Activated CD8-positive, alpha-beta memory T cell treated with anti-CD3 and anti-CD28 coated beads, Interleukin-2, amount 10 ng/mL, durations not matched to agents 7 days and 5 days (primary cell): ENCODE measurements at regions of chr4 and their contacts with region 1.

Region 1: DNA sequence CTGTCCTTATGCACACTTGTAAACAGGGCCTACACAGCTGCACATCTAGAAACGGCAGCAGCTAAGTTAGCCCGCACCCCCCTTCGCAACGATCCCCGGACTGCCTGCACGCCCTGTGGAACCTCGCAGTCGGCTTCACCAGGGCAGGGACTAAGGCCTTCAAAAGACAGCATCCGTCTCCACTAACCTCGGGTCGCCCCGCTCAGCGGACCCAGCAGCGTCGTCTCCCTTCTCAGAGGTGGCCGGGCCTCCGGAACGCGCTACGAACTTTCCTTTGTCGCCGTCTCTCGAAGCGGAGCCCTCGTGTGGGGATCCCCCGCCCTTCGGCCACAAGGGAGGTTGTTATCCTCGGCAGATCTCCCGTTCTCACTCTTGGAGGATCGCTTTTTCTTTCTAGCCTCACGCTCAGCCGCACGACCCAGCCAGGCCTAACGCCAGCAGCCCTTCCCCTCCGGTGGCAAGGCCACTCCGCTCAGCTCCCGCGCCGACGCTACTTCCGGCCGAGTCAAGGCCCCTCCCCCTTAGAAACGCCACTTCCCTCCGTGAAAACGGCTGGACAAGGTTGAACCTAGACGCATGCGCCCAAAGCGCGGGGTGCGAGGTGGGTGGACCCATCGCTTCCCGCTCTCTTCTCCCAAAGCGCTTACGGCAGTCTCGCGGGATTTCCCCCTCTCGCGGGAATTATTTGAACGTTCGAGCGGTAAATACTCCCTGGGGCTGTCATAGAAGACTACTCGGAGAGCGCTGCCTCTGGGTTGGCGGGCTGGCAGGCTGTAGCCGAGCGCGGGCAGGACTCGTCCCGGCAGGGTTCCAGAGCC is at the starts of genes DCAF16 and NCAPG:
- DNase-seq: peak; percentile 99
- ATAC-seq: peak; percentile 90
- H3K4me3 Mint-ChIP-seq: peak within 1 kb of the TSS; percentile 96
- H3K27ac Mint-ChIP-seq: peak within 1 kb of the TSS; percentile 98
- H3K4me1 Mint-ChIP-seq: peaks cover 47% of the 10 kb centered on the region
- H3K27me3 Mint-ChIP-seq: no peaks in the 10 kb centered on the region
- total RNA-seq, gene DCAF16: 38.9 to 56.4 TPM
- total RNA-seq, gene NCAPG: 87.5 to 102 TPM

Region 2: GRCh38 chr4:17702641-17703040 is 107.8 kb before region 1 on chr4:
- CTCF ChIA-PET with region 1: no interaction called
- DNase-seq: no peak
- ATAC-seq: no peak
- H3K4me3 Mint-ChIP-seq: no peak overlapping the region
- H3K27ac Mint-ChIP-seq: no peak overlapping the region
- H3K4me1 Mint-ChIP-seq: no peaks in the 10 kb centered on the region
- H3K27me3 Mint-ChIP-seq: peaks cover 15% of the 10 kb centered on the region

Region 3: DNA sequence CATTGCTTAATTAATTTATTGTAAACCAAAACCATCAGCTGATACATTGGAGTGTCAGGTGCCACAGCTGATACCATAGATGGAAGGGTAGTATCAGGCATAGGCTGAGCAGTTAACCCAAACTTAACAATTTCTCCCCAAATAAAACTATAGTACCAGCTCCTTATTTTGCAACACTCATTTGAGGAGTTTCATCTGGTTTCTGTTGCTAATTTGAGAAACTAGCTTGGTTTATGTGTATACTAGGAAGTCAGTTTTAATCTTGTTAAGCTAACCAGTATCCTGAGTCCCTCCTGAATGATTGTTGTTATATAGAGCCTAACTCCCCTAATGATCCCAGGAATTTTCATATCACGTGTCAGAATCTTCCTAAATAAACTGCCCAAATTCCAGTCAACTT is 12.7 kb before region 1 on chr4:
- CTCF ChIA-PET with region 1: interaction called, 37 read pairs
- DNase-seq: no peak
- ATAC-seq: peak; percentile 42
- H3K4me3 Mint-ChIP-seq: no peak overlapping the region
- H3K27ac Mint-ChIP-seq: peak overlapping the region; percentile 30
- H3K4me1 Mint-ChIP-seq: peaks cover 17% of the 10 kb centered on the region
- H3K27me3 Mint-ChIP-seq: no peaks in the 10 kb centered on the region

Region 4: DNA sequence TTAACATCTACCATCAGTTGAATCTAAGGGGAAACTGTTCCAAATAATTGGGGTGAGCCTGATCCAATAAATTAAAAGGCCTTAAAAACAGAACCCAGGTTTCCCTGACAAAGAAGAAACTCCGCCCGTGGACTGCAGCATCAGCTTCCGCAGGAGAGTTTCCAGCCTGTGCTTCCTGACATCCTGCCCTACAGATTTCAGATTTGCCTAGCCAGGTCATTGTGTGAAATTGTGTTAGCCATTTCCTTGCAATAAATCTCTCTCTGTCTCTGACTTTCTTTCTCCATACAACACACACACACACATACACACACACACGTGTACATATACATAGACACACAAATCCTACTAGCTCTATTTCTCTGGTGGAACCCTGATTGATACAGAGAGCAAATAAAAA is 259.3 kb after region 1 on chr4:
- CTCF ChIA-PET with region 1: no interaction called
- DNase-seq: no peak
- ATAC-seq: no peak
- H3K4me3 Mint-ChIP-seq: no peak overlapping the region
- H3K27ac Mint-ChIP-seq: no peak overlapping the region
- H3K4me1 Mint-ChIP-seq: peaks cover 4% of the 10 kb centered on the region
- H3K27me3 Mint-ChIP-seq: peaks cover 40% of the 10 kb centered on the region